Dorsolateral prefrontal cortex (tissue), 120 donors: ENCODE measurements at regions of chr5 and their contacts with region 1.

Region 1: DNA sequence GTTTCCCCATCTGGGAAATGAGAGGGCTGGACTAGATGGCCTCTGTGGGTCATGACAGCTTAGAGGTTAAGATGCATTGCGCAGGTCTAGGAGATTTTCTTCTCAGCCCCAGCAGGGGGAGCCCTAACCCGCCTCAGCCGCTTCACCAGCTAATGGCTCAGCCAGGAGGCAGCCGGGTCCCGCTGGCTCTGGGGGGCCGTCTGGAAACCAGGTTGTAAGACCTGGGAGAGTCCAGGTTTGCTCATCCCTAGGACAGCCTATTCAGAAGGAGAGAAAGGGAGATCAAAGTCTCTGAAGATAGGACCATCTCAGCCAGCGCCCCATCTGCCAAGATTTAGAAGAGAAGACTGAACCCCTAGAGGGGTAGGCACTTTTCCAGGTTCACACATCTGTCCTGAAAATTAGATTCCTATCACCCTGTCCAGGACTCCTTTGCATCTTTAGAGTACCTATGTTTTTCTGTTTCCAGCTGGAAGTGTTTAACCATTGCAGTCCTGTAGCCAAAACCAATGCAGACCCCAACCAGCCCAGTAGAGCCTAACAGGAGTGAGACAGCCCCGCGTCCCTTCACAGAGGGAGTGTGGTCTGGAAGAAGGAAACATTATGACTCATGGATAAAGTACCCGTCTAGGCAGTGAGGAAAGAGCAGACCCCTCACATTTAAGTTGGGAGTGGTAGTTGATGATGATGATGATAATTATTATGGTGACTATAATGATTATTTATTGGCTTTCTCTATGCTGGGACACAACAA is 27.5 kb downstream of the SPARC start:
- DNase-seq: peak; percentile 74 to 90 (median 82)
- H3K4me3 ChIP-seq: peak overlapping the region in 5 of 59 donors; percentile 9 to 38 (median 16)
- H3K27ac ChIP-seq: peak overlapping the region in 1 of 59 donors; percentile 28
- H3K27me3 ChIP-seq: no peaks in the 10 kb centered on the region
- CTCF ChIP-seq: peak; percentile 77 to 100 (median 94)

Region 2: GRCh38 chr5:151682751-151683331 is 23.7 kb after region 1 on chr5:
- intact Hi-C with region 1: loop called in 1 of 2 experiments (anchors 2 kb)
- DNase-seq: peak in 1 of 10 donors; percentile 38
- H3K4me3 ChIP-seq: peak overlapping the region in 4 of 59 donors; percentile 3 to 67 (median 39)
- H3K27ac ChIP-seq: peak overlapping the region in 33 of 59 donors; percentile 1 to 90 (median 39)
- H3K27me3 ChIP-seq: no peaks in the 10 kb centered on the region
- CTCF ChIP-seq: no peak

Region 3: GRCh38 chr5:151719228-151720000 is 60.2 kb after region 1 on chr5:
- intact Hi-C with region 1: loop called in 1 of 2 experiments (anchors 1 kb)
- DNase-seq: peak in 2 of 10 donors; percentile 27 to 44
- H3K4me3 ChIP-seq: no peak overlapping the region
- H3K27ac ChIP-seq: no peak overlapping the region
- H3K27me3 ChIP-seq: no peaks in the 10 kb centered on the region
- CTCF ChIP-seq: peak; percentile 38 to 78 (median 64)

Region 4: GRCh38 chr5:151740336-151740942 is 81.3 kb after region 1 on chr5:
- intact Hi-C with region 1: loop called (anchors 1 to 2 kb)
- DNase-seq: peak in 6 of 10 donors; percentile 28 to 57 (median 50)
- H3K4me3 ChIP-seq: peak overlapping the region in 7 of 59 donors; percentile 2 to 39 (median 12)
- H3K27ac ChIP-seq: peak overlapping the region in 36 of 59 donors; percentile 6 to 76 (median 42)
- H3K27me3 ChIP-seq: no peaks in the 10 kb centered on the region
- CTCF ChIP-seq: peak; percentile 81 to 98 (median 93)

Region 5: GRCh38 chr5:152178350-152178699 is 519.1 kb after region 1 on chr5:
- intact Hi-C with region 1: no loop called
- DNase-seq: no peak
- H3K4me3 ChIP-seq: no peak overlapping the region
- H3K27ac ChIP-seq: no peak overlapping the region
- H3K27me3 ChIP-seq: peaks cover 0 to 13% (median 0%) of the 10 kb centered on the region in 45 donors
- CTCF ChIP-seq: no peak